ENCODE measurements at regions of chr11 and their contacts with region 1.

Region 1: DNA sequence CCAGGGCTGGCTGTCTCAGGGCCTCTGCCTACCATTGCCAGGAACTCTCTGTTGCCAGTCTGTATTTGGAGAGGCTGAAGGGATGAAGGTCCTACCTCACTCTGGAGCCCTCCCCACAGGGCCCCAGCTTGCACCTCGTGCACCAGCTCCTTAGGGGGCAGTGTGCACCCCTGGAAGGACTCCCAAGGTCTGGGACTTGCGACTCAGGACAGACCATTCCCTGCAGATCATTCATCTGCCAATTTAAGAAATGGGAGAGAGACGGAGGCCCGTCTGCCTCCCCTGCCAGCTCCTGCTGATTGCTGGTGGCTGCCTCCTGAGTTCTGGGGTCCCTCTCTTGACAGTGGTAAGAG is 27.5 kb upstream of the MALAT1 start:
- DNase-seq: peak; percentile 47
- ATAC-seq: no peak
- H3K4me3 ChIP-seq: peak overlapping the region in 1 of 5 experiments; percentile 26
- H3K4me3 Mint-ChIP-seq: peak overlapping the region; percentile 19
- H3K27ac ChIP-seq: peak overlapping the region; percentile 56 to 77
- H3K27ac Mint-ChIP-seq: peak overlapping the region; percentile 97
- H3K4me1 ChIP-seq: peaks cover 16 to 30% of the 10 kb centered on the region in 2 donors
- H3K4me1 Mint-ChIP-seq: peaks cover 27% of the 10 kb centered on the region
- H3K27me3 ChIP-seq: no peaks in the 10 kb centered on the region
- H3K27me3 Mint-ChIP-seq: no peaks in the 10 kb centered on the region
- CTCF ChIP-seq: no peak

Region 2: DNA sequence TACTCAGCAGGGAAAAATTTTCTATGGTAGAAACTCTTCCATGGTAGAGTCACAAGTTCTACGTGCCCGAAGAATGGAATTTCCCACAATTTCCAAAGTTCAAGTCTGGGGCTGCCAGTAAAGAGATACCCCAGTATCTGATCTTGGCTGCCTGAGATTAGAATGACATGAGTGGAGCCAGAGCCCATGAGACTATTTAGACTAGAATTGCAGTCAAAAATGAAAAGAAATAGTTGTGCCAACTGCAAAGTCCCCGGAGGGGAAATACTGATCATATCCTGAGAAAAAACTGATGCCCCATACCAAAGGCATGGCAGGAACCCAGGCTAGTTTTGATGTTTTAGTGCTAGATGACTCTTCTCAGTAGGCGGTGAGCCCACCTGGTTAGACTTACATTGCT is 510.7 kb before region 1 on chr11:
- CTCF ChIA-PET with region 1: no interaction called
- POLR2A ChIA-PET with region 1: no interaction called
- intact Hi-C with region 1: no loop called
- DNase-seq: no peak
- ATAC-seq: no peak
- H3K4me3 ChIP-seq: no peak overlapping the region
- H3K4me3 Mint-ChIP-seq: no peak overlapping the region
- H3K27ac ChIP-seq: no peak overlapping the region
- H3K27ac Mint-ChIP-seq: no peak overlapping the region
- H3K4me1 ChIP-seq: no peaks in the 10 kb centered on the region
- H3K4me1 Mint-ChIP-seq: peaks cover 4% of the 10 kb centered on the region
- H3K27me3 ChIP-seq: no peaks in the 10 kb centered on the region
- H3K27me3 Mint-ChIP-seq: peaks cover 4% of the 10 kb centered on the region
- CTCF ChIP-seq: no peak

Region 3: GRCh38 chr11:65308281-65309093 is 162.9 kb before region 1 on chr11:
- CTCF ChIA-PET with region 1: no interaction called
- POLR2A ChIA-PET with region 1: no interaction called
- intact Hi-C with region 1: no loop called
- DNase-seq: no peak
- ATAC-seq: no peak
- H3K4me3 ChIP-seq: no peak overlapping the region
- H3K4me3 Mint-ChIP-seq: no peak overlapping the region
- H3K27ac ChIP-seq: no peak overlapping the region
- H3K27ac Mint-ChIP-seq: no peak overlapping the region
- H3K4me1 ChIP-seq: no peaks in the 10 kb centered on the region
- H3K4me1 Mint-ChIP-seq: peaks cover under 1% of the 10 kb centered on the region
- H3K27me3 ChIP-seq: peaks cover 0 to 3% (median under 1%) of the 10 kb centered on the region in 4 experiments
- H3K27me3 Mint-ChIP-seq: peaks cover 2% of the 10 kb centered on the region
- CTCF ChIP-seq: no peak

Region 4: GRCh38 chr11:65391007-65391406 is 80.4 kb before region 1 on chr11:
- CTCF ChIA-PET with region 1: no interaction called
- POLR2A ChIA-PET with region 1: no interaction called
- intact Hi-C with region 1: no loop called
- DNase-seq: no peak
- ATAC-seq: no peak
- H3K4me3 ChIP-seq: no peak overlapping the region
- H3K4me3 Mint-ChIP-seq: no peak overlapping the region
- H3K27ac ChIP-seq: no peak overlapping the region
- H3K27ac Mint-ChIP-seq: peak overlapping the region; percentile 46
- H3K4me1 ChIP-seq: peaks cover 44 to 57% of the 10 kb centered on the region in 2 donors
- H3K4me1 Mint-ChIP-seq: peaks cover 49% of the 10 kb centered on the region
- H3K27me3 ChIP-seq: no peaks in the 10 kb centered on the region
- H3K27me3 Mint-ChIP-seq: no peaks in the 10 kb centered on the region
- CTCF ChIP-seq: no peak

Region 5: DNA sequence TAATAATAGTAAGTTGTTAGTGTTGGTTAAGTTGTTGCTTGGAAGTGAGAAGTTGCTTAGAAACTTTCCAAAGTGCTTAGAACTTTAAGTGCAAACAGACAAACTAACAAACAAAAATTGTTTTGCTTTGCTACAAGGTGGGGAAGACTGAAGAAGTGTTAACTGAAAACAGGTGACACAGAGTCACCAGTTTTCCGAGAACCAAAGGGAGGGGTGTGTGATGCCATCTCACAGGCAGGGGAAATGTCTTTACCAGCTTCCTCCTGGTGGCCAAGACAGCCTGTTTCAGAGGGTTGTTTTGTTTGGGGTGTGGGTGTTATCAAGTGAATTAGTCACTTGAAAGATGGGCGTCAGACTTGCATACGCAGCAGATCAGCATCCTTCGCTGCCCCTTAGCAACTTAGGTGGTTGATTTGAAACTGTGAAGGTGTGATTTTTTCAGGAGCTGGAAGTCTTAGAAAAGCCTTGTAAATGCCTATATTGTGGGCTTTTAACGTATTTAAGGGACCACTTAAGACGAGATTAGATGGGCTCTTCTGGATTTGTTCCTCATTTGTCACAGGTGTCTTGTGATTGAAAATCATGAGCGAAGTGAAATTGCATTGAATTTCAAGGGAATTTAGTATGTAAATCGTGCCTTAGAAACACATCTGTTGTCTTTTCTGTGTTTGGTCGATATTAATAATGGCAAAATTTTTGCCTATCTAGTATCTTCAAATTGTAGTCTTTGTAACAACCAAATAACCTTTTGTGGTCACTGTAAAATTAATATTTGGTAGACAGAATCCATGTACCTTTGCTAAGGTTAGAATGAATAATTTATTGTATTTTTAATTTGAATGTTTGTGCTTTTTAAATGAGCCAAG is 46.0 kb before region 1 on chr11:
- CTCF ChIA-PET with region 1: interaction called, 5 read pairs
- POLR2A ChIA-PET with region 1: interaction called, 81 read pairs
- intact Hi-C with region 1: loop called (anchors 2 kb)
- DNase-seq: peak; percentile 94
- ATAC-seq: peak; percentile 36
- H3K4me3 ChIP-seq: peak overlapping the region; percentile 63 to 98 (median 75)
- H3K4me3 Mint-ChIP-seq: peak overlapping the region; percentile 92
- H3K27ac ChIP-seq: peak overlapping the region; percentile 91 to 97
- H3K27ac Mint-ChIP-seq: peak overlapping the region; percentile 100
- H3K4me1 ChIP-seq: peaks cover 79 to 88% of the 10 kb centered on the region in 2 donors
- H3K4me1 Mint-ChIP-seq: peaks cover 75% of the 10 kb centered on the region
- H3K27me3 ChIP-seq: no peaks in the 10 kb centered on the region
- H3K27me3 Mint-ChIP-seq: no peaks in the 10 kb centered on the region
- CTCF ChIP-seq: peak; percentile 37

Region 6: GRCh38 chr11:65440831-65441499 is 30.4 kb before region 1 on chr11:
- CTCF ChIA-PET with region 1: interaction called, 10 read pairs
- POLR2A ChIA-PET with region 1: interaction called, 6 read pairs
- intact Hi-C with region 1: loop called (anchors 1 kb)
- DNase-seq: peak; percentile 81
- ATAC-seq: peak; percentile 40
- H3K4me3 ChIP-seq: peak overlapping the region in 3 of 5 experiments; percentile 24 to 48 (median 29)
- H3K4me3 Mint-ChIP-seq: peak overlapping the region; percentile 89
- H3K27ac ChIP-seq: peak overlapping the region; percentile 59 to 79
- H3K27ac Mint-ChIP-seq: peak overlapping the region; percentile 98
- H3K4me1 ChIP-seq: peaks cover 63 to 69% of the 10 kb centered on the region in 2 donors
- H3K4me1 Mint-ChIP-seq: peaks cover 62% of the 10 kb centered on the region
- H3K27me3 ChIP-seq: no peaks in the 10 kb centered on the region
- H3K27me3 Mint-ChIP-seq: no peaks in the 10 kb centered on the region
- CTCF ChIP-seq: no peak

Region 7: GRCh38 chr11:65487413-65488272 is 16.3 kb after region 1 on chr11:
- CTCF ChIA-PET with region 1: interaction called, 4 read pairs
- POLR2A ChIA-PET with region 1: interaction called, 62 read pairs
- intact Hi-C with region 1: no loop called
- DNase-seq: peak; percentile 66
- ATAC-seq: peak; percentile 49
- H3K4me3 ChIP-seq: no peak overlapping the region
- H3K4me3 Mint-ChIP-seq: peak overlapping the region; percentile 72
- H3K27ac ChIP-seq: no peak overlapping the region
- H3K27ac Mint-ChIP-seq: peak overlapping the region; percentile 72
- H3K4me1 ChIP-seq: peaks cover 34 to 43% of the 10 kb centered on the region in 2 donors
- H3K4me1 Mint-ChIP-seq: peaks cover 45% of the 10 kb centered on the region
- H3K27me3 ChIP-seq: no peaks in the 10 kb centered on the region
- H3K27me3 Mint-ChIP-seq: no peaks in the 10 kb centered on the region
- CTCF ChIP-seq: no peak

Measured in B cell (primary cell).